ENCODE measurements at regions of chr1 and their contacts with region 1.

Region 1: GRCh38 chr1:151281969-151282882 is at the start of gene ZNF687:
- DNase-seq: peak; percentile 97 to 100 (median 98)
- ATAC-seq: peak; percentile 95
- H3K4me3 ChIP-seq: peak within 1 kb of the TSS; percentile 67
- H3K27ac ChIP-seq: peak within 1 kb of the TSS; percentile 99
- H3K4me1 ChIP-seq: peaks cover 24 to 33% of the 10 kb centered on the region in 2 experiments
- H3K27me3 ChIP-seq: no peaks in the 10 kb centered on the region
- CTCF ChIP-seq: 0 out of 6 replicates have a peak, but pooled peaks of 1 of the 3 experiments have one; percentile 6
- EP300 ChIP-seq: no peak
- POLR2A ChIP-seq: peak; percentile 11; the same call in 1 of the 2 replicates
- RAD21 ChIP-seq: no peak
- polyA plus RNA-seq, gene ZNF687: 0.13 to 0.21 TPM

Region 2: DNA sequence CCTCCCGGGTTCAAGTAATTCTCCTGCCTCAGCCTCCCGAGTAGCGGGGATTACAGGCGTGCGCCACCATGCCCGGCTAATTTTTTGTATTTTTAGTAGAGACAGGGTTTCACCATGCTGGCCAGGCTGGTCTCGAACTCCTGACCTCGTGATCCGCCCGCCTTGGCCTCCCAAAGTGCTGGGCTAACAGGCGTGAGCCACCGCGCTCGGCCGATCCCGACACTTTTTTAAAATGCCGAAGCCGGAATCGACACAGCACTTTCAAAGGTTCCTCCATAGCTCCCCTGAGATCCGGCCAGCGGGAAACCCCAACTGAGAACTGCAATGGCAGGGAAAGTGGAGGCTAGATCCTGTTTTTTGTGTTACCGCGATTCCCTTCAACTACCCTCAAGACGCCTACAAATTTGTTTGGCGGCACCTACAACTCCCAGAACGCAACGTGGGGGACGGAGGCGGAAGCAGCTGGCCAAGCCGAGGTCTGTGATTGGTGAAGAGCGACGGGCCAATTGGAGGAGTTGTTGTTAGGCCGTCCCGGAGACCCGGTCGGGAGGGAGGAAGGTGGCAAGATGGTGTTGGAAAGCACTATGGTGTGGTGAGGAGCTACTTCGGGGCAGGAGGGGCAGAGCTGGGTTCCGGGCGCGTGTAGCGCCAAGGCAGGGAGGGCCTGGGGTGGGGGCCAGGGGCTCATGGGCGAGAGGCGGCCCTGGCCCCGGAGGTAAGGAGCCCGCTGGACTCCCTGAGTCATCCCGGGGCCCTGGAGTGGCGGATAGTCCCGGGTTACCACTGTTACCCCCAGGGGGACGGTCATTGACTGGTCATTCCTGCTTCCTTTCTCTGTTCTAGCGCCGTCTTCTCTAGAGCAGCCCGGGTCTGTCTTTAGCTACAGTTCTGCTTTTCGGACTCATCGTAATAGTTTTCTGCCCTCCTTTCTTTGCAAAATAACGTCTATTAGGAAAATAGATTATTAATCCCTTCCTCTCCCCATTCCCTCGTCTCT is 27.7 kb before region 1 on chr1 and contains the start of gene PSMD4:
- CTCF ChIA-PET with region 1: no interaction called
- POLR2A ChIA-PET with region 1: interaction called, 11 read pairs
- in situ Hi-C with region 1: no loop called
- intact Hi-C with region 1: loop called (anchors 2 kb)
- DNase-seq: peak; percentile 98 to 100 (median 99)
- ATAC-seq: peak; percentile 97
- H3K4me3 ChIP-seq: peak within 1 kb of the TSS; percentile 58
- H3K27ac ChIP-seq: peak within 1 kb of the TSS; percentile 83
- H3K4me1 ChIP-seq: peaks cover 0 to 4% of the 10 kb centered on the region in 2 experiments; a peak in 2 of 5 replicates
- H3K27me3 ChIP-seq: no peaks in the 10 kb centered on the region
- CTCF ChIP-seq: no peak
- EP300 ChIP-seq: no peak; the same call in 1 of the 2 replicates
- POLR2A ChIP-seq: peak; percentile 98
- RAD21 ChIP-seq: no peak
- polyA plus RNA-seq, gene PSMD4: 194 to 243 TPM

Region 3: DNA sequence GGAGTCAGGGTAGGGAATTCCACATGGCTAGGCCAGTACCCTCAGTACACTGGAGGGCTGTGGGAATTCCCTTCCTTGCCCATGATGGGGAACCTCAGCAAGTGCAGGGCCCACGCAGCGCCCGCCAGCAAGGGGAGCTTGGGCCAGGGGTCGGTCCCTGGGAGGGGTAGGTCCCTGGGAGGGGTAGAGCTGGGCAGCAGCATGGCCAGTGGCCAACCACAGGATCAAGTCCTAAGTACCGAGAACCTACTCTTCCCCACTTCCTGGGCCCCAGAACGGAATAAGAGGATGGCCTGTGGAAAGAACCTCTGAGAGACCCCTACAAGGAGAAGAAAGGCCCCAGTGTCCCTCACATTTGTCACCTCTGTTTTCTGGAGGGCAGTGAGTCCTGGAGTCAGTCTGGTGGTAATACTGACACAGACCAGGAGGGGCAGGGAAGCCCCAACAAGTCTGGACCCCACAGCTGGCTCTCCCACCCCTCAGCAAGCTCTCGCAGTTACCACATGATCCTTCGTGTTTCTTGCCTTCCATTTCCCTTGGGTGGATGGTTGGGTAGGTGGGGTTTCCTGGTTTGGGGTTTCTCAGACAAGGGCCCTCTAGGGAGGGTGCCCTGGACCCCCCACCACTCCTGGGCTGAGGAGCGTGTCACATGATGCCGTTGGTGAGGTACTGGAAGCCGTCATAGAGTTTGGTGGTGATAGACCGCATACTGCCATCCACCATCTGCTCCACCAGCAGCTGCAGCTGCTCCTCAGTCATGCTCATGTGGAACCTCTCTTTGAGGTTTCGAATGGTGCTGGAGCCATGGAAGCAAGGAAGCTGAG is 10.2 kb after region 1 on chr1:
- CTCF ChIA-PET with region 1: no interaction called
- POLR2A ChIA-PET with region 1: interaction called, 43 read pairs
- in situ Hi-C with region 1: no loop called
- intact Hi-C with region 1: no loop called
- DNase-seq: peak in 1 of 4 experiments; percentile 27
- ATAC-seq: peak; percentile 62
- H3K4me3 ChIP-seq: no peak overlapping the region
- H3K27ac ChIP-seq: no peak overlapping the region; the same call in 2 of the 3 replicates
- H3K4me1 ChIP-seq: peaks cover 0 to 28% of the 10 kb centered on the region in 2 experiments; a peak in 2 of 5 replicates
- H3K27me3 ChIP-seq: no peaks in the 10 kb centered on the region
- CTCF ChIP-seq: peak in 2 of 3 experiments; percentile 14 to 21; a peak in 1 of 6 replicates
- EP300 ChIP-seq: no peak
- POLR2A ChIP-seq: peak; percentile 67
- RAD21 ChIP-seq: no peak

Region 4: GRCh38 chr1:151327223-151327902 is 45.1 kb after region 1 on chr1 and contains the start of gene PI4KB:
- CTCF ChIA-PET with region 1: no interaction called
- POLR2A ChIA-PET with region 1: interaction called, 10 read pairs
- in situ Hi-C with region 1: no loop called
- intact Hi-C with region 1: no loop called
- DNase-seq: peak; percentile 93 to 98 (median 96)
- ATAC-seq: peak; percentile 92
- H3K4me3 ChIP-seq: peak within 1 kb of the TSS; percentile 55
- H3K27ac ChIP-seq: peak within 1 kb of the TSS; percentile 86
- H3K4me1 ChIP-seq: peaks cover 3 to 29% of the 10 kb centered on the region in 2 experiments; a peak in 3 of 5 replicates
- H3K27me3 ChIP-seq: no peaks in the 10 kb centered on the region
- CTCF ChIP-seq: no peak
- EP300 ChIP-seq: no peak
- POLR2A ChIP-seq: peak; percentile 82
- RAD21 ChIP-seq: no peak
- polyA plus RNA-seq, gene PI4KB: 3.1 to 8.9 TPM

Region 5: GRCh38 chr1:151356696-151357095 is 74.5 kb after region 1 on chr1:
- CTCF ChIA-PET with region 1: no interaction called
- POLR2A ChIA-PET with region 1: no interaction called
- in situ Hi-C with region 1: no loop called
- intact Hi-C with region 1: no loop called
- DNase-seq: no peak
- ATAC-seq: no peak; the same call in 2 of the 3 replicates
- H3K4me3 ChIP-seq: no peak overlapping the region
- H3K27ac ChIP-seq: no peak overlapping the region
- H3K4me1 ChIP-seq: no peaks in the 10 kb centered on the region; a peak in 1 of 5 replicates
- H3K27me3 ChIP-seq: no peaks in the 10 kb centered on the region
- CTCF ChIP-seq: no peak
- EP300 ChIP-seq: no peak
- POLR2A ChIP-seq: no peak
- RAD21 ChIP-seq: no peak

Region 6: DNA sequence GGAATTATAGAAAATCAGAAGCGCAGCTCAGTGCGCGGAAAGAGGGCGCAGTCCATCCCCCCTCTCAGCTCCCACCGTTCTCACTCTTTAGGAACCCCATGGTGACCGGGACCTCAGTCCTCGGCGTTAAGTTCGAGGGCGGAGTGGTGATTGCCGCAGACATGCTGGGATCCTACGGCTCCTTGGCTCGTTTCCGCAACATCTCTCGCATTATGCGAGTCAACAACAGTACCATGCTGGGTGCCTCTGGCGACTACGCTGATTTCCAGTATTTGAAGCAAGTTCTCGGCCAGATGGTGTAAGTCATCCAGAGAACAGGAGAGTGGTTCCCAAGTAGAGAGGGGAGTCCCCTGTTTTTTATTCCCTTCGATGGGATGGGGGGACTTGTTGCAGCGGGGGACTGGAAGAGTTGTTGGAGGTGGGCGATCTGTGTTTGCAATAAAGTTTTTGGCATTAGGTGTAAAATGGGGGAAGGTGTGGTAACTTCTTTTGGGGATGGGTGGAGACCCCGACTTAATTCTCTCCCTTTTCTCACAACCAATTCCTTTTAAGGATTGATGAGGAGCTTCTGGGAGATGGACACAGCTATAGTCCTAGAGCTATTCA is 117.8 kb after region 1 on chr1:
- CTCF ChIA-PET with region 1: interaction called, 7 read pairs
- POLR2A ChIA-PET with region 1: interaction called, 15 read pairs
- in situ Hi-C with region 1: no loop called
- intact Hi-C with region 1: no loop called
- DNase-seq: peak in 2 of 4 experiments; percentile 27 to 32
- ATAC-seq: peak; percentile 50
- H3K4me3 ChIP-seq: peak overlapping the region; percentile 86
- H3K27ac ChIP-seq: peak overlapping the region; percentile 85
- H3K4me1 ChIP-seq: peaks cover 0 to 3% of the 10 kb centered on the region in 2 experiments; a peak in 3 of 5 replicates
- H3K27me3 ChIP-seq: no peaks in the 10 kb centered on the region
- CTCF ChIP-seq: no peak
- EP300 ChIP-seq: no peak
- POLR2A ChIP-seq: no peak
- RAD21 ChIP-seq: no peak